ENCODE measurements at regions of chr4 and their contacts with region 1.

Region 1: DNA sequence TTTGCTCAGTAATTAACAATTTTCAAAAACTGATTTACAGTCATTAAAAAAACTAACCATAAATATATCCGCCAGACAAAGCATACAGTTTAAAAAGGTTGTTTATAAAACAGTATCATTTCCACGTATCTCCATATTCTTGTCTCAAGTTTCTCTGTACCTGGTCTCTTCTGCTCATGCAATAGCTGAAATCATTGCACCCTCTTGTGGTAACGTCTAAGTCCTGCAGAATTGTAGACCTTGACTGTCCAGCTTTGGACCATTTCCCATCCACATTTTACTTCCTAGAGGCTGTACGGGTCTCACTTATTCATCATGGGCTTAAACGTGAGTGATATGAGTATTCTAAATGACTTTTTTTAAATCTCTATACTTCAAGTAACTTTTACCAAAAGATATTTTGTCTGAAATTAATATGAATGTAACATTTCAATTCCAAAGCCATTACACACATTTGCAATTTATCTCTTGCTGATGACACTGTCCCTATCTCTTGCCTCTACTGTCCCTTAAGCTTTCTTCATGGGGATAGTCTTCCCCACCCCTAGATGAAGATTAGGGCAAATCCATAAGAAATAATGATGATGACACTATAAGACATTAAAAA is 118.5 kb downstream of the BTC start:
- DNase-seq: peak; percentile 67
- H3K4me3 Mint-ChIP-seq: no peak overlapping the region
- H3K27ac Mint-ChIP-seq: no peak overlapping the region
- H3K4me1 Mint-ChIP-seq: no peaks in the 10 kb centered on the region
- H3K27me3 Mint-ChIP-seq: peaks cover 25% of the 10 kb centered on the region

Region 2: DNA sequence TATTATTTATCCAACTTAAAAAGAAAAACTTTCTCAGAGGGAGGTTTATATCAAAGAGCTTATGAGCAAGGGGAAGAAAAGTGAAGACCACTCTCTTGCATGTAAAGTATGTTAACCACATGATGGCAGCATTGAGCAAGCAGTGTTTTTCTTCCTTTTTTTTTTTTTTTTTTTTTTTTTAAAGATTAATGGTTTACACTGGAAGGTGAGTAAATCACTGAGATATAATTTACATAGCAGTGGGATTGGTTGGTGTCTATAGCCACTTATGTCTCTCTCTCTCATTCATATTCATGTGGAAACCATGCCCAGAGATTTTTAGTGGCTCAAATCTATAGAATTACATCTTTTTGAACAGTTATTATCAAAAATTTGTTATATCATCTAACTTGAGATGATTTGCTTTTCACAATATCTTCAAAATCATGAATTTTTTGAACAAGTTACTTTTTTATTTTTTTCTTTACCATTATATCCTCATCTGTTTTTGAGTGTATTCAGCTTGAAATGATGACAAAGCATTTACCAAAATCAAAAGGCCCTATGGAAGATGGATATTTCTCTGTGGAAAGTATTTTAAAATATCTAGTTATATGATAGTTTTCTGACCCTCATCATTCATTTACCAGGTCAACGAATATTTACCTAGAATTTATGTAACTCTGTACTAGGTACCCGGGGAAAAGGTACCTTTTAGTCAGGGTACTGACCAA is 486.3 kb before region 1 on chr4:
- intact Hi-C with region 1: loop called (anchors 10 kb)
- DNase-seq: peak; percentile 57
- H3K4me3 Mint-ChIP-seq: no peak overlapping the region
- H3K27ac Mint-ChIP-seq: no peak overlapping the region
- H3K4me1 Mint-ChIP-seq: no peaks in the 10 kb centered on the region
- H3K27me3 Mint-ChIP-seq: peaks cover 1% of the 10 kb centered on the region

Region 3: DNA sequence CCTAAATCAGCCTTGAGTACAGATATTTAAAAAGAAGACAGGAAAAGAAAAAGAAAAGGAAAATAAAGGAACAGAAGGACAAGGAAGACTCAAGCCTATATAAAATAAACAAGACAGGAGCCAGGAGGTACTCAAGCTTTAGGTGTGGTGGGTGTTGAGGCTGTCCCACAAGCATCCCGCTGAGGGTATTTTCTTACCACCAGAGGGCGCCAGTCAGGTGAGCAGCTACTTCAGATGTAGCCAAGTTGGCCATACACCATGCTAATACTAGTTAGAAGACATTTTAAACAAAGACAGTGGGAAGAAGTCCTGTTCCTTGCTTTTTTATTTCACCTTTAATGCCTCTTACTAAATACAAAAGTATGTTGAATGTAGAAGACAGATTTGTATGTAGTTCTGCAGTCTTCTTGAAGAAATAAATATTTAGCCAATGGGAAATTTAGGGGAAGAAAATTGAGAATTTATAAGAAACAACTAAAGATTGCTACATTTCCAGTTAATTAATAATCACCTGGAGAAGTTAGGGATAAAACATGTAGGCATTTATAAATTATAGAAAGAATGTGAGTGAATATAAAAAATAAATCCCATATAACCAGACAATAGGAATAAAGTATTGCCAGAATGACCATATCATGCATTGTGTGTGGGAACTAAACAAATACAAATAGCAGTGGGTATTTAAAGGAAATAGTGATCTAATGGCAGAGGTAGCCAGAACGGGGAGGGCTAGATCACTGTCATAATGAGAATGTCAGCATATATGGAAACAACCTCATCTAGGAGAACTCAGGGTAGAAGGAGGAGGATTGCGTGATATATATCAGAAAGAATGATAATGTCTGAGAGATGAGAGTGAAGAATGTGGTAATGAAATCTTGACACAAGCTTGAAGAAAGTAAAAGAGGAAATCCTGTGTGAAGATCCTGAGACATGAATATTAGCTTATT is 446.8 kb before region 1 on chr4:
- intact Hi-C with region 1: loop called (anchors 5 kb)
- DNase-seq: peak; percentile 92
- H3K4me3 Mint-ChIP-seq: no peak overlapping the region
- H3K27ac Mint-ChIP-seq: peak overlapping the region; percentile 51
- H3K4me1 Mint-ChIP-seq: peaks cover 9% of the 10 kb centered on the region
- H3K27me3 Mint-ChIP-seq: no peaks in the 10 kb centered on the region

Region 4: GRCh38 chr4:74293558-74293957 is 382.2 kb before region 1 on chr4:
- intact Hi-C with region 1: no loop called
- DNase-seq: no peak
- H3K4me3 Mint-ChIP-seq: no peak overlapping the region
- H3K27ac Mint-ChIP-seq: no peak overlapping the region
- H3K4me1 Mint-ChIP-seq: no peaks in the 10 kb centered on the region
- H3K27me3 Mint-ChIP-seq: no peaks in the 10 kb centered on the region

Region 5: GRCh38 chr4:74320559-74321118 is 355.1 kb before region 1 on chr4:
- intact Hi-C with region 1: loop called (anchors 1 kb)
- DNase-seq: peak; percentile 65
- H3K4me3 Mint-ChIP-seq: no peak overlapping the region
- H3K27ac Mint-ChIP-seq: no peak overlapping the region
- H3K4me1 Mint-ChIP-seq: peaks cover 1% of the 10 kb centered on the region
- H3K27me3 Mint-ChIP-seq: peaks cover 23% of the 10 kb centered on the region

Region 6: DNA sequence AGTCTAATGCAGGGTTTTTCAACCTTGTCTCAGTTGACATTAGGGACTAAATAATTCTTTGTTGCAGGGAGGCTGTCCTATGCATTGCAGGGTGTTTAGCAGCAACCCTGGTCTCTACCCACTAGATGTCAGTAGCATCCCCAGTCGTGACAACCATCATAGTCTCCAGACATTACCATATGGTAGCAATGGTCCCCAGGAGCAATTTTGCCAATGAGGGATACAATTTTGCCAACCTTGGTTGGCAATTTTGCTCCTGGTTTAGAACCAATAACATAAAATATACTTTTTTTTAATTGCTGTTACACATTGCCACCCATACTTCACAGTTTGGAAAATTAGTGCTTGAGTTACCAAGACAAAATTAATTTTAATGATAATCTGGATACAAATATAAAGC is 304.9 kb before region 1 on chr4:
- intact Hi-C with region 1: loop called (anchors 1 kb)
- DNase-seq: peak; percentile 75
- H3K4me3 Mint-ChIP-seq: no peak overlapping the region
- H3K27ac Mint-ChIP-seq: no peak overlapping the region
- H3K4me1 Mint-ChIP-seq: peaks cover 2% of the 10 kb centered on the region
- H3K27me3 Mint-ChIP-seq: peaks cover 15% of the 10 kb centered on the region

Region 7: GRCh38 chr4:74376888-74377483 is 298.8 kb before region 1 on chr4:
- intact Hi-C with region 1: loop called (anchors 1 kb)
- DNase-seq: no peak
- H3K4me3 Mint-ChIP-seq: no peak overlapping the region
- H3K27ac Mint-ChIP-seq: no peak overlapping the region
- H3K4me1 Mint-ChIP-seq: peaks cover 2% of the 10 kb centered on the region
- H3K27me3 Mint-ChIP-seq: peaks cover 8% of the 10 kb centered on the region

Measured in activated CD4-positive, alpha-beta T cell treated with anti-CD3 and anti-CD28 coated beads, Interleukin-2, amount 10 ng/mL, durations not matched to agents 24 days and 14 days (primary cell).